ENCODE measurements at regions of chr19 and their contacts with region 1.

Region 1: DNA sequence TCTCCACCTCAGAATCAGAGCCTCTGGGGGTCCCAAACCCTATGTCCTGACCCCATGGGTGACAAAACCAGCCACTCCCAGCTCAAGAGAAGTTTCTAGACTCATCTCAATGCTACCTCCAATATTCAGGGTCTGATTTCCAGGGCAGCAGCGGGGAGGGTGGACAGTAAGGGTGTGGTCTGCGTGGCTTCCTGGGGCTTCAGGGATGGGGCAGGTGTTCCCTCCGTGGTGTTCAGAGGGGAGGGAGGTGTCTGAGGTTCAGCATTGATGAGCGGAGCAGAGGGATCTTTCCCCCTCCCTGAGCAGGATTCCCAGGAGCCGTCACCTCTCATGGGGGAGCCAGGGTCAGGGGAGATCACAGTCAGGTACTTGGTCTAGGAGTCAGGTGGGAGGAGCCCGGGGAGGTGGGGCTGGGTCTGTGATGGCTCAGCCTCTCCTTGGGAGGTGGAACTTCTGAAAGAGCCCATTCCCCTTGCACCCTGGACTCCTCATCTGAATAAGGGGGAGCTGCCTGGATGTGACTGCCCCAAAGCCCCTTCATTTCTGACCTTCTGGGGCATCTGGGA is 2.9 kb downstream of the LILRA2 start:
- DNase-seq: no peak
- ATAC-seq: no peak
- H3K4me3 ChIP-seq: no peak overlapping the region
- H3K4me1 ChIP-seq: no peaks in the 10 kb centered on the region
- CTCF ChIP-seq: no peak

Region 2: GRCh38 chr19:54297760-54298305 is 278.7 kb before region 1 on chr19:
- intact Hi-C with region 1: loop called in 1 of 2 experiments (anchors 2 kb)
- DNase-seq: peak in 1 of 3 donors; percentile 19
- ATAC-seq: no peak
- H3K4me3 ChIP-seq: no peak overlapping the region
- H3K4me1 ChIP-seq: no peaks in the 10 kb centered on the region
- CTCF ChIP-seq: no peak

Region 3: DNA sequence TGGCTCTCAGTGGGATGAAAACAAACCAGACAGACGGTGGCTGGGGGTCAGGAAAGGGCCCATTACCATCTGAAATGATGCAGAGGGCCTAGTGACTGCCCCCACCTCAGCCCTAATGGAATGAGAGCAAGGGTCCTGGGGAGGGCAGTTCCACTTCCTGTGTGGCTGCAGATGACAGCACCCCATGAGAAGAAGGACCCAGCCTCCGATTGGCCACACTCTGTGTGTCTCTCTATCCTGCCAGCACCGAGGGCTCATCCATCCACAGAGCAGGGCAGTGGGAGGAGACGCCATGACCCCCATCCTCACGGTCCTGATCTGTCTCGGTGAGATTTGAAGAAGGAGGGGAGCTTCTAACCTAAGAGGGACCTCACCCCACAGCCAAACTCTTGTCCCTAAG is 54.3 kb after region 1 on chr19:
- intact Hi-C with region 1: no loop called
- DNase-seq: no peak
- ATAC-seq: peak; percentile 24
- H3K4me3 ChIP-seq: no peak overlapping the region
- H3K4me1 ChIP-seq: no peaks in the 10 kb centered on the region
- CTCF ChIP-seq: no peak